ENCODE measurements at regions of chr11 and their contacts with region 1.

Region 1: DNA sequence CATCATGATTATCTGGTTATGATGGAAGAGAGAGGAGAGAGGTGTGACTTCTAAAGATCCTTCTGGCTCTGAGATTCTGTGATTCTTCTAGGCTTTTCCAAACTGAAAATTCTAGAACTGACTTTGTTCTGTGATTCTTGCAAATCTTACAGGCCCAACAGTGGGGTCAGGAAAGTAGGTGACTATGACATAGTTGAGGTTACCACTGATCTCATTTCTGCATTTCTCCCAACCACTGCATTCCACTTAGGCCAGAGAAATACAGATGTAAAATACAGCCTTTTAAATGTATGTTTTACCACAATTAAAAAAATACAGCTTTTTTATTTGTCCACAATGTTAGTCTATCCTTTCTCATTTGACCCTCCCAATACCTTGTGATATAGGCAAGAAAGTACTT is 83.7 kb downstream of the STIM1 start:
- DNase-seq: no peak
- H3K4me3 Mint-ChIP-seq: no peak overlapping the region
- H3K27ac Mint-ChIP-seq: no peak overlapping the region
- H3K4me1 Mint-ChIP-seq: peaks cover 70% of the 10 kb centered on the region
- H3K27me3 Mint-ChIP-seq: no peaks in the 10 kb centered on the region

Region 2: DNA sequence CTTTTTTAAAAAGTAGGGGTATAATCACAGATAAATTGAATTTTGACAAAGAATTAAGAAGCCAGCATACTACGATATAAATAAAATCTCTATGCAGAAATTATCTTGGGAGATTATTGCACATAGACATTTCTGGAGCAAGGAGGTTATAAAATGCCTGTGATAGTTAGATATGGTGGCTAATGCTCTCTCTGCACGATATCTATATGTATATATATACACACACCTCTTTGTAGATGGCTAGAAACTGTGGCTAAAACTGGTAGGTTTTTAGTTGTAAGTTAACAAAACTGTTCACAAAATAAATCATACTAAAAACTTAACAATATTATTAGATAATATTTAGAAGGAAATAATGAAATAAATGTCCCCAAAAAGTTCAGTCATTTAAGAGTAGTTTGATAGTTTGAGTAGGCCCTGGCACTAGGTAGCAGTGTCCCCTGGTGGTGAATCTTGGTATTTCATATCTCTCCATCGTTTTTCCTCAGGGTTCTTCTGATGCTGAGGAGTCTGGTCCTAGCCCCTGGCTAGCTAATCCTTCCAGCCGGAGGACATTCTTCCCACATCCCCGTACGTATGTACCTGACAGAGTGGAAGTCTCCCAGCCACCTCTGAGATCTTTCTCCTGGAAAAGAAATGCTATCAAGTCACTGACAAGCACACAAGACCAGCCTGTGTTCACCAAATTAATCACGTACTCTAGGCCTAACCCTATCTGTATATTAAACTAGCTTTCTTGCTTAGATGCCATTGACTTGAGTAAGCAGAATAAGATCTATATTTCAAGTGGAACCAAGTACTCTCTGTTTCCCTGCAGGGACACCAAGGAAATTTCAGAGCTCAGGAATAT is 329.6 kb before region 1 on chr11:
- CTCF ChIA-PET with region 1: no interaction called
- POLR2A ChIA-PET with region 1: no interaction called
- DNase-seq: peak; percentile 21
- H3K4me3 Mint-ChIP-seq: no peak overlapping the region
- H3K27ac Mint-ChIP-seq: no peak overlapping the region
- H3K4me1 Mint-ChIP-seq: peaks cover 9% of the 10 kb centered on the region
- H3K27me3 Mint-ChIP-seq: peaks cover 2% of the 10 kb centered on the region

Region 3: DNA sequence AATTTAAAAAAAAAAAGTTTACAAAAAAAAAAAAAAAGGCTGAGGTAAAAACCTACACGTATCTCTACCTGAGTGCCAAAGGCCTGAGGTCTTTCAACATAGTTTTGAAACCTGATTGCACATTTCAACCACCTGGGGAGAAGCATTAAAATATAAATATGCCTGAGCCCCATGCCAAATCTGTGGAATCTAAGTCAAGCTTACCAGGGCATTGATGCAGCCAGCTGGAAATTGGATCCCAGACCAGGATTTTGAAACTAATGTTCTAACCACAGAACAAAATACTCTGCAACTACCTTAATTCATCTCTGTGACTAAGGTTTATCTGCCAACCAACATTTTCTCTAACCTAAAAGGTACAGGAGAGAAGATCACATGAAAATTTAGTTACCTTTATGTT is 229.2 kb before region 1 on chr11:
- CTCF ChIA-PET with region 1: no interaction called
- POLR2A ChIA-PET with region 1: no interaction called
- DNase-seq: no peak
- H3K4me3 Mint-ChIP-seq: no peak overlapping the region
- H3K27ac Mint-ChIP-seq: no peak overlapping the region
- H3K4me1 Mint-ChIP-seq: peaks cover 2% of the 10 kb centered on the region
- H3K27me3 Mint-ChIP-seq: no peaks in the 10 kb centered on the region

Region 4: DNA sequence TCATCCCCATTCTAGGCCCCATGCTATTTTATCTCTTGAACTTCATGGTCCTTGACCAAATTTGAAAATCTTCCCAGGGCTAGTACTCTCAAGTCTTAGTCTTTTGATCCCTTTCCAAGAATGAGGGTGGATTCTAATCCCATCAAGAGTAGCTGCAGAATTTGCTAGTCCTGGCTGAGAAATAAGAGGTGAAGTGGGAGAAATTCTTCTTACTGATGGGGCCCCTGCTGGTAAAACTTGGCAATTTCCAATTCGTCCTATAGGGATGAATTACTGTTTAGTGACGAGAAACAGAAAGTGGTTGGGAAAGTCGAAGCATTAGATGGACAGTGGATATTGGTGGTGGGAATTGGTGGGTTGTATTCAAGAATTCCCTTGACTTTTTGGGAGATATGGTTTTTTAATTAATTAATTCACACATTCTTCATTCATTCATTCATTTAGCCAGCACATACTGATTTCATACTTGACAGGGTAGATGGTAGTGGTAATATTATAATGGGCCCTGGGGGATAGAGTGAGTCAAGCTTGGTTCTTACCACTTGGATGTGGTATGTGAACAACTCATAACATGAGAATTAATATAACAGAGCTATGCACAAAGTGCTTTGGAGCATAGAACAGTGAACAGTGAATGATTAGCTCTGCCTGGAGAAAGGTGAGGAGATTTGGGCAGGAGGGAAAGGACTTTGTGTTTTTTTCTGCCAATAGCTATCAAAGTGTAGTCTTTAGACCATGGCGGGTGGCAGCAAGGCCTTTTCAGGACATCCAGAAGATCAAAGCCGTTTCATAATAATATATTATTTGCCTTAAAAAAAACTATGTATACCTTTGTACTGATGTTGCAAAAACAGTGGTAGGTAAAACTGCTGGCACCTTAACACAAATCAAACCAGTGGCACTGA is 20.1 kb after region 1 on chr11:
- CTCF ChIA-PET with region 1: interaction called, 9 read pairs
- POLR2A ChIA-PET with region 1: interaction called, 13 read pairs
- DNase-seq: no peak
- H3K4me3 Mint-ChIP-seq: no peak overlapping the region
- H3K27ac Mint-ChIP-seq: no peak overlapping the region
- H3K4me1 Mint-ChIP-seq: peaks cover 63% of the 10 kb centered on the region
- H3K27me3 Mint-ChIP-seq: no peaks in the 10 kb centered on the region

Region 5: DNA sequence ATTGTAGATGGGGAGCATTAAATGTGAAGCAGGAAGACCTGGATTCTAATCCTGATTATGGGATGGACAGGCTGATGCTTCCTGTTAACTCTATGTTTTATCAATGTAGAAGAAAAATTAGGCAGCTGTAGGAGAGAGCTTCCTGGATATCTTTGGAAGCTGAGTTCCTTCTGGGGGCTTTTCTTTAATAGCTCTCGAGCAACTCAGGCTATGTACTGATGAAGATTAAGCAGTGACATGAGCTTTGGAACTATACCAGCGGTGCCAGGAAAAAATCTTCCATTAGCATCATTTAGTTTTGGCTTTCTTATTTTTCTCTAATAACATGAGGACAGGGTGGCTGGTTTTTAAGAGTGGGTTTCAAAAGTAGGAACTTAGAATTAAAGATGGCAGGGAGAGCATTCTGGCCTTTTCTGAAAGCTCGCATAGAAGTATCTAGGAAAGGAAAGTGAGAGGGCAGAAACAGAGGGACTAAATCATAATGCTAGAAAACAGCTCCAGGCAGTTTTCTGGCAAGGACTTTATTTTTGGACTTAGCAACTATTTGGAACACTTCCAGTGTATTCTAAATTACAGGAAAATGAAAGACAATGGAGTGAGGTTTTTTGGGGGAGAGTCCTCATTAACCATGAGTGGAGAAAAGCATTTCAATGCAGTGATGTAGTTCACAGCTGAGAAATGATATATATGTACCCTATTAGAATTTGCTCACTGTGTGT is 86.2 kb after region 1 on chr11:
- CTCF ChIA-PET with region 1: no interaction called
- POLR2A ChIA-PET with region 1: no interaction called
- DNase-seq: no peak
- H3K4me3 Mint-ChIP-seq: no peak overlapping the region
- H3K27ac Mint-ChIP-seq: no peak overlapping the region
- H3K4me1 Mint-ChIP-seq: peaks cover 2% of the 10 kb centered on the region
- H3K27me3 Mint-ChIP-seq: no peaks in the 10 kb centered on the region